ENCODE measurements at regions of chr13 and their contacts with region 1.

Region 1: DNA sequence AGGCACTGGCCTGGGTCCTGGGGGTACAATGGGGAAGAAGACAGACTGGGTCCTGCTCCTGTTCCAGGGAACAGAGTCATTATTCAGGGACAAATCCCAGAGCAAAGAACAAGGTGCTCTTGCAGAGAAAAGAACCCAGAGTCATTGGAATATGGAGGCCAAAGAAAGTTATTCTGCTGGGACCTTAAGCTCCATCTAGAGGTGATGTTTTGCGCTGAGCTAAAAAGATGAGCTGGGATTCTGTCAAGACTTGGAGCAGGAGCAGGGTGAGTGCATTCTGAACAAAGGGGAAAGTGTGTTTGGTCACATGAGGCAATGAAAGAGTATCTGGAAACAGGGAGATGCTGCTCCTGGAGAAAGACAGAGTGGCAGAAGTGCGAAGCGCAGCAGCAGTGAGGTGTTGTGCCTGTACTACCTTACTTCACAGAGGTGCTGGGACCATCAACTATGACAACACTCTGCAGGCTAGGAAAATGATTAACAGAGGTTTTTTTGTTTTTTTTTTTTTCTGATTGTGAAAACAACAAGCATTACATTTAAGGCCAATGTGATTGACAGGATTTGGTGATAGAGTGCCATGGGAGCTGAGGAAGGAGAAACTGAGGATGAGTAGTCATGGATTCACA is 95.3 kb upstream of the TNFSF11 start:
- DNase-seq: no peak
- ATAC-seq: peak; percentile 90
- H3K4me3 ChIP-seq: no peak overlapping the region
- H3K27ac ChIP-seq: no peak overlapping the region
- H3K4me1 ChIP-seq: 0 out of 2 replicates have a peak, but pooled peaks cover 3% of the 10 kb centered on the region
- H3K27me3 ChIP-seq: no peaks in the 10 kb centered on the region
- CTCF ChIP-seq: peak; percentile 46 to 58 (median 47); a peak in 5 of 6 replicates
- EP300 ChIP-seq: no peak
- POLR2A ChIP-seq: no peak
- RAD21 ChIP-seq: peak; percentile 83

Region 2: DNA sequence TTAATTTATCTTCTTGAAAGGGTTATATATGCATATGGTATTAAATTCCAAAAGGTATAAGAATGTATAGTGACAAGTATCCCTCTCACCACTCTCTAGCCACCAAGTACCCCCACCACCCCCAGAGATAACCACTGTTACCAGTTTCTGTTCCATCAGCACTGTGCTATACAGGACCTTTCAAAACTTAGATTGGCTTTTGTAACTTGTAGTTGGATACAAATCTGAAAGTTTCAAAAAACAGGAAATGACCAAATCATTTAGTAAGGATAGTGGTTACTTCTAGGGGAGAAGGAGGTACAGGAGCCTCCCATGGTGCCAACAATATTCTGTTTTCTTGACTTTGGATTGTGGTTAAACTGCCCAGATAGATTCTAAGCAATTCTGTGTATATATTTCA is 150.0 kb before region 1 on chr13:
- CTCF ChIA-PET with region 1: interaction called, 67 read pairs
- POLR2A ChIA-PET with region 1: interaction called, 4 read pairs
- RAD21 ChIA-PET with region 1: interaction called, 85 read pairs
- SMC1A ChIA-PET with region 1: interaction called, 83 read pairs
- in situ Hi-C with region 1: no loop called
- intact Hi-C with region 1: no loop called
- DNase-seq: no peak
- ATAC-seq: peak; percentile 90
- H3K4me3 ChIP-seq: no peak overlapping the region
- H3K27ac ChIP-seq: peak overlapping the region; percentile 45; the same call in 1 of the 2 replicates
- H3K4me1 ChIP-seq: peaks cover 12% of the 10 kb centered on the region
- H3K27me3 ChIP-seq: no peaks in the 10 kb centered on the region
- CTCF ChIP-seq: no peak
- EP300 ChIP-seq: no peak
- POLR2A ChIP-seq: no peak
- RAD21 ChIP-seq: no peak

Region 3: DNA sequence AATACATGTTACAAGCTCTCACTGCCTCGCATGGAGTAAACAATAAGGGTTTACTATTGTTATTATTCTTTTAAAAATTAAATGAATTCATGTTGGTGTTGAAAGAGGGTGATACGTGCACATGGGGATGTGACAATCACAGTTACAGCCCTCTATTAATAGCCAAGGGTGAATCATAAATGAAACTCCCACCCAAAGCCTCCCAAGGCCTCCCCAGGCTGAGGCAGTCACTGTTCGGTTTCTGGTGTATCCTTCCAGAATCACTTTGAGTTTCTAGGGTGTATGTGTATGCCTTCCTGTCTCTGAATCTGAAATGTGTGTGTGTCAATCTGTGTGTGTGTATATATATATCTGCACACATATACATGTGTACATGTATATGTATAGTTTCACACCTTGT is 133.3 kb before region 1 on chr13:
- CTCF ChIA-PET with region 1: interaction called, 7 read pairs
- POLR2A ChIA-PET with region 1: interaction called, 3 read pairs
- RAD21 ChIA-PET with region 1: interaction called, 11 read pairs
- SMC1A ChIA-PET with region 1: interaction called, 4 read pairs
- in situ Hi-C with region 1: no loop called
- intact Hi-C with region 1: no loop called
- DNase-seq: no peak
- ATAC-seq: peak; percentile 73
- H3K4me3 ChIP-seq: no peak overlapping the region
- H3K27ac ChIP-seq: no peak overlapping the region
- H3K4me1 ChIP-seq: peaks cover 9% of the 10 kb centered on the region; the same call in 1 of the 2 replicates
- H3K27me3 ChIP-seq: no peaks in the 10 kb centered on the region
- CTCF ChIP-seq: no peak
- EP300 ChIP-seq: no peak
- POLR2A ChIP-seq: no peak
- RAD21 ChIP-seq: no peak

Region 4: DNA sequence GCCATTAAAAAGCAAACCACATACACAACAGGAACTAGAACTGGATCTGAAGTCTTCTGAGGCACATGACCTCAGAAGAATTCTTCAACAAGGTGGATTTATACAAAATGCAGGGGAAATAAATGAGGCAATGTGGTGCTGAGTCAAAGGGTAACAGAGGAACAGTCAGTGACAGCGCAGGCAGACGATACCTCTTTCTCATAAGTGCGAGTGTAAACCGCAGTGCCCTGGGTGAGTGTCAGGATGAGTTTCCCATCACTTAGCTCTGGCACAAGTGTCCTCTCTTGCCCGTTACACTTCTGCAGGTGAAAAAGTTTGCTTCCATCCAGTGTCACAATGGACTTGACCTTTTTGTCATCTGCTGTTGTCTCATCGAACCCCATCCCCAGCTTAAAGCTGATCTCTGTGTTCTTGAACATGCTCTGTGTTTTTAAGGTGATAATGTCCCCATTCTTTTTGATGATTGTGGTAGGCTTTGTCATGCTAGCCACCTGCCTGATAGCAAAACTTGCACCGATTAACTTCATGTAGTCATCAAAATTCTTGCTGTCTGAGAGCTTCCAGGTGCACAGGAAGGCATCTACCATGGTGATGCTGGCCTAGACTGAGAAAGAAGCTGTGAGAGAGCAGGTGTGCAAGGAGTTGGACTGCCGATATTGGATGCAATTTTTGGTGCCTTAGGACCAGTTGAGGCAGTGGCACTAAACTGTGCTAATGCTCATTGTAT is 109.4 kb before region 1 on chr13:
- CTCF ChIA-PET with region 1: interaction called, 9 read pairs
- POLR2A ChIA-PET with region 1: interaction called, 7 read pairs
- RAD21 ChIA-PET with region 1: interaction called, 4 read pairs
- SMC1A ChIA-PET with region 1: interaction called, 15 read pairs
- in situ Hi-C with region 1: no loop called
- intact Hi-C with region 1: no loop called
- DNase-seq: no peak
- ATAC-seq: no peak
- H3K4me3 ChIP-seq: no peak overlapping the region
- H3K27ac ChIP-seq: peak overlapping the region; percentile 64
- H3K4me1 ChIP-seq: peaks cover 17% of the 10 kb centered on the region
- H3K27me3 ChIP-seq: no peaks in the 10 kb centered on the region
- CTCF ChIP-seq: no peak
- EP300 ChIP-seq: no peak
- POLR2A ChIP-seq: no peak
- RAD21 ChIP-seq: no peak

Region 5: DNA sequence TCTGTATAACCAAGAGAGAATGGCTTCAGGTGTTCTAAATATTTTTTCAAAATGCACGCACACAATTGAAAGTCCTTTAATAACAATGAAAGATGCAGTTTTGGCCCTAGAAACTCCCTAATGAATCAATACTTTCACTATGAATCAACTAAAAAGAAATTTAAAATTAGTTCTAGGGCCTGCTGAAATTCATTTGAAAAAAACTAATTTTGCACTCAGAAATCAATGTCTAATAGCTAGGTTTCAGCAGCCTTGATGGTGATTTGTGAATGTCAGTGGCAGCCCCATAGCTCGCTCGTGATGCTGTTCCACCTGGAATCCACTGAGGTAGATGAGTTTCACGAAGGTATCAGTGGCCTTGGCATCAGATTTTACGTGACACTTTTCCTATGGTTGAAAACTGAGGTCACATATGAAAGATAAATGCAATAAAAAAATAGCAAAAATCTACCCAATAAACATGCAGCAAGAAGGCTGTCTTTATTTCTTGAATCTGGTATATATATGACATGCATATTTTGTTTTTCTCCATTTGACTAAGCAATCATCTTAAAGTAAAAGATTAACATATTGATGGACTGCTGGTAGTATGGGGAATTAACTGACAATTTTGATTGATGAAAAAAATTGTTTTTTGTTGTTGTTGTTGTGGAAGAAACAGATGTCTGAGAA is 65.7 kb before region 1 on chr13:
- CTCF ChIA-PET with region 1: interaction called, 15 read pairs
- POLR2A ChIA-PET with region 1: no interaction called
- RAD21 ChIA-PET with region 1: interaction called, 12 read pairs
- SMC1A ChIA-PET with region 1: interaction called, 25 read pairs
- in situ Hi-C with region 1: no loop called
- intact Hi-C with region 1: loop called (anchors 5 kb)
- DNase-seq: peak; percentile 72
- ATAC-seq: peak; percentile 83
- H3K4me3 ChIP-seq: no peak overlapping the region
- H3K27ac ChIP-seq: peak overlapping the region; percentile 96
- H3K4me1 ChIP-seq: peaks cover 46% of the 10 kb centered on the region
- H3K27me3 ChIP-seq: no peaks in the 10 kb centered on the region
- CTCF ChIP-seq: no peak
- EP300 ChIP-seq: peak; percentile 93
- POLR2A ChIP-seq: no peak
- RAD21 ChIP-seq: no peak

Region 6: DNA sequence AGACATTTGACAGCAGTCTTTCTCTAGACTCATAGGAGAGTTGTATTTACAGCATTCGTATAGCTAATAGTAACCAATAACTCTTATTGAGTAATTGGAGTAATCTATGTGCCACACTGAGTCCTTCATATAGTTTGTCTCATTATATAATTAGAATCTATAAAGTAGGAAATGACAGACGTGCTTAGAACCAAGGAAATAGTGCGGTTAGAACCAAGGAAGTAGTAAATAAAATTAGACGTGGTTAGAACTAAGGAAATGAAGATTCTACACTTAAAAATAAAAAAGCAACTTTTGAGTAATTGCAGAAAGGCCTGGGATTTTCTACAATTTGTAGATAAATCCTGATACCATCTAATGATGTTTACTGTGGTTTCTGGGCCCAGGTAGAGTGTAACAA is 12.5 kb before region 1 on chr13:
- CTCF ChIA-PET with region 1: interaction called, 13 read pairs
- POLR2A ChIA-PET with region 1: no interaction called
- RAD21 ChIA-PET with region 1: interaction called, 6 read pairs
- SMC1A ChIA-PET with region 1: interaction called, 5 read pairs
- in situ Hi-C with region 1: no loop called
- intact Hi-C with region 1: no loop called
- DNase-seq: no peak
- ATAC-seq: peak; percentile 21
- H3K4me3 ChIP-seq: no peak overlapping the region
- H3K27ac ChIP-seq: peak overlapping the region; percentile 13; the same call in 1 of the 2 replicates
- H3K4me1 ChIP-seq: no peaks in the 10 kb centered on the region
- H3K27me3 ChIP-seq: no peaks in the 10 kb centered on the region
- CTCF ChIP-seq: no peak
- EP300 ChIP-seq: no peak
- POLR2A ChIP-seq: no peak
- RAD21 ChIP-seq: no peak

Measured in GM12878 (cell line).